AG04449 (cell line): ENCODE measurements at regions of chr15 and their contacts with region 1.

Region 1: GRCh38 chr15:37891766-37892368 is 42.6 kb upstream of the TMCO5A start:
- DNase-seq: no peak
- H3K4me3 ChIP-seq: no peak overlapping the region
- CTCF ChIP-seq: peak; percentile 81

Region 2: DNA sequence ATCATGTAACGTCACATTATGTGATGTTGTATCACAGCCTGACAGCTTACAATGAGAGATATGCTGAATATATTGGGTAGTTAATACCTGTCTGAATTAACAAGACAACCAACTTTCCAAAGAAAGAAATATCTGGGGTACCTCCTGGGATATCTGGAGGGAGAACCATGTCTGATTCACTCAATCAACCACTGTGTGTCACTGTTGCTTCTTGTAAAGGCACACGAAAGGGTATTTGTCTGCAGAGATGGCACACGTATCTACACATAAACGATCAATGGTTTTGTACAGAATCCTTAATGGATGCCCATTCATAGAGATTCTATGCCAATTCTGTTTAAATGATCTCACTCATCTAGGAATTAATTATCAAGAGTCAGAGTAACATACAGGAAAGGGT is 209.6 kb before region 1 on chr15:
- CTCF ChIA-PET with region 1: interaction called, 10 read pairs
- POLR2A ChIA-PET with region 1: no interaction called
- DNase-seq: no peak
- H3K4me3 ChIP-seq: no peak overlapping the region
- CTCF ChIP-seq: peak; percentile 13